Breast epithelium (tissue), 4 donors: ENCODE measurements at regions of chr4 and their contacts with region 1.

Region 1: DNA sequence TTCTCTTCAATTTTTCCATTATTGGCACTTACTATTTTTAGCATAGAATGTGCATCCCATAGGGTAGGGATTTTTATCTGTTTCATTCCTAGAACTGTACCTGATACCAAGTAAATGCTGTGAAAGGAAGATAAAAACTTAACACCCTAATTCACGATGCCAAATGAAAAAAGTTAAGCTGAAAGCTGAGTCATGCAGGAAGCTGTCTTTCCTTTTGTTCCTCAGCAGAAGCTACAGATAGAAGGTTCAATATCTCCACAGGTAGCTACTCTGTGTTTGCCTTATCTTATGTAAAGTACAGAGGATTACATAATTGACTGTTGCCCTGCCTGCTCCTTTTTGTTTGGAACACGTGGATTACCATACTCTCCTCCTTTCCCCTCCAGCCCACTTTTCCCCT is 77.0 kb downstream of the LRP2BP start:
- DNase-seq: no peak
- H3K4me3 ChIP-seq: no peak overlapping the region
- H3K27ac ChIP-seq: no peak overlapping the region
- H3K4me1 ChIP-seq: no peaks in the 10 kb centered on the region
- H3K27me3 ChIP-seq: no peaks in the 10 kb centered on the region
- CTCF ChIP-seq: no peak
- POLR2A ChIP-seq: no peak

Region 2: DNA sequence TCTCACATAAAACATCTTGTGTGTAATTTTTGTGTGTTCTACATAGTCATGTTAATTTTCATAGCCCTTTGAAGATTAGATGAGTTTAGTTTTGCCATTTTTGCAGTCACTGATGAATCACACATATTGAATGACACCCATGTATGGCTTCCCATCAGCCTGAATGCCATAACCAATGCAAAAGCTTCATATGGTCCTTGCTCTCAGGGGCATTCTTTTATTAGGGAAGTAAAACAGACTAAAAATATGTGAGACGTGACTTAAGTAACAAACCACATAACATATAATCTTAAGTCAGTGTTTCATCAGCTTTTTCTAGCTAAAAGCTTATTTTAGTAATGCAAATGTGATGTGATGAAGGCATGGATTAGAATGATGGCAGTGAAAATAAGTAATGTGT is 167.4 kb before region 1 on chr4:
- intact Hi-C with region 1: loop called (anchors 5 kb)
- DNase-seq: no peak
- H3K4me3 ChIP-seq: no peak overlapping the region
- H3K27ac ChIP-seq: no peak overlapping the region
- H3K4me1 ChIP-seq: no peaks in the 10 kb centered on the region
- H3K27me3 ChIP-seq: no peaks in the 10 kb centered on the region
- CTCF ChIP-seq: no peak
- POLR2A ChIP-seq: no peak

Region 3: GRCh38 chr4:185358514-185358913 is 39.8 kb after region 1 on chr4:
- intact Hi-C with region 1: no loop called
- DNase-seq: no peak
- H3K4me3 ChIP-seq: no peak overlapping the region
- H3K27ac ChIP-seq: no peak overlapping the region
- H3K4me1 ChIP-seq: no peaks in the 10 kb centered on the region
- H3K27me3 ChIP-seq: no peaks in the 10 kb centered on the region
- CTCF ChIP-seq: no peak
- POLR2A ChIP-seq: no peak

Region 4: GRCh38 chr4:185656467-185656931 is 337.8 kb after region 1 on chr4:
- intact Hi-C with region 1: no loop called
- DNase-seq: peak in 1 of 2 donors; percentile 52
- H3K4me3 ChIP-seq: peak overlapping the region; percentile 28 to 37 (median 29)
- H3K27ac ChIP-seq: peak overlapping the region; percentile 34 to 53
- H3K4me1 ChIP-seq: no peaks in the 10 kb centered on the region
- H3K27me3 ChIP-seq: no peaks in the 10 kb centered on the region
- CTCF ChIP-seq: peak; percentile 15 to 44 (median 34)
- POLR2A ChIP-seq: no peak